SK-N-SH (cell line): ENCODE measurements at regions of chr2 and their contacts with region 1.

Region 1: GRCh38 chr2:36918307-36918706 is 48.0 kb downstream of the STRN start:
- DNase-seq: no peak
- H3K4me3 ChIP-seq: no peak overlapping the region
- H3K27ac ChIP-seq: no peak overlapping the region
- H3K4me1 ChIP-seq: no peaks in the 10 kb centered on the region; a peak in 1 of 4 replicates
- H3K27me3 ChIP-seq: no peaks in the 10 kb centered on the region
- CTCF ChIP-seq: peak; percentile 58
- EP300 ChIP-seq: no peak
- RAD21 ChIP-seq: peak; percentile 27; the same call in 1 of the 2 replicates

Region 2: GRCh38 chr2:36556842-36557241 is 361.5 kb before region 1 on chr2:
- CTCF ChIA-PET with region 1: no interaction called
- POLR2A ChIA-PET with region 1: no interaction called
- DNase-seq: no peak
- H3K4me3 ChIP-seq: no peak overlapping the region
- H3K27ac ChIP-seq: peak overlapping the region; percentile 16 to 98; a peak in 3 of 4 replicates
- H3K4me1 ChIP-seq: peaks cover 2 to 63% of the 10 kb centered on the region in 2 experiments
- H3K27me3 ChIP-seq: no peaks in the 10 kb centered on the region
- CTCF ChIP-seq: no peak
- EP300 ChIP-seq: peak in 1 of 2 experiments; percentile 40; a peak in 1 of 4 replicates
- RAD21 ChIP-seq: no peak

Region 3: GRCh38 chr2:36906277-36906676 is 12.0 kb before region 1 on chr2:
- CTCF ChIA-PET with region 1: interaction called, 12 read pairs
- POLR2A ChIA-PET with region 1: no interaction called
- DNase-seq: no peak
- H3K4me3 ChIP-seq: no peak overlapping the region
- H3K27ac ChIP-seq: no peak overlapping the region
- H3K4me1 ChIP-seq: no peaks in the 10 kb centered on the region
- H3K27me3 ChIP-seq: no peaks in the 10 kb centered on the region
- CTCF ChIP-seq: no peak
- EP300 ChIP-seq: no peak
- RAD21 ChIP-seq: no peak